ENCODE measurements at regions of chr14 and their contacts with region 1.

Region 1: GRCh38 chr14:64671591-64671990 is 32.6 kb upstream of the PLEKHG3 start:
- DNase-seq: no peak
- H3K4me3 ChIP-seq: no peak overlapping the region
- CTCF ChIP-seq: peak; percentile 61

Region 2: GRCh38 chr14:64681796-64682710 is 10.5 kb after region 1 on chr14:
- CTCF ChIA-PET with region 1: interaction called, 19 read pairs
- POLR2A ChIA-PET with region 1: interaction called, 4 read pairs
- DNase-seq: no peak
- H3K4me3 ChIP-seq: no peak overlapping the region
- CTCF ChIP-seq: no peak

Region 3: GRCh38 chr14:64772393-64772950 is 100.9 kb after region 1 on chr14:
- CTCF ChIA-PET with region 1: interaction called, 11 read pairs
- POLR2A ChIA-PET with region 1: no interaction called
- DNase-seq: no peak
- H3K4me3 ChIP-seq: no peak overlapping the region
- CTCF ChIP-seq: no peak